Activated B cell treated with CpG ODN at 0.5 μM for 24 hours (primary cell): ENCODE measurements at regions of chr19 and their contacts with region 1.

Region 1: DNA sequence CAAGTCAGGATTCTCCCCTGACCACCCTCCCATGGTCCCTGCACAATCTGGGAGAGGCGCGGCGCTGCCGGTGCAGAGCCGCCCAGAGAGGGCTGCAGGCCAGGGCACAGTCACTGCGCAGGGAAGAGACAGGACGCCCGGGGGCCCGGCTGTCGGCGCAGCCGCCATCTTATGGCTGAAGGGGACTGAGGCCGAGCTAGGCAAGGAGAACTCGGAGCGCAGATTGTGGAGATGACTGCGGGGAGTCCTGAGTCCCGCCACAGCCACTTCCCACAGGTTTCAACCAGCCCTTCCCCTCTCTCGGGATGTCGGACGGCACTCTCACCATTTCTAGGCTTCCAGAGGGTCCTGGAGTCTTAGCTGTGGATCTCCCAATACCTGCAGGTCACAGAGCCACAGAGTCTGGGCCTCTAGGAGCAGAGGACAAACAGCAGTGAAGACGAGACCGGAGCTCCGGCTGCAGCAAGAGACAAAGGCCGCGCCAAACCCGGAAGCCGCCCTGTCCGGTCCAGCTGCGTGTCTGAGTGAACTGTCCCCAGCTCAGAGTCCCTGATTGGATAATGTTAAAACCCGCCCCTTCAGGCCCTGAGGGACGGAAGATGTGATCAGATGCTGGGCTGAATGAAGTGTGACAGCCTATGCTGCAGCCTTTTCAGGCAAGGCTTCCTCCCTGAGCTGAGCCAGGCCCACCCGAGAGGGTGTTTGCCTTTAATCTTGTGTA is at the start of gene ZNF708:
- DNase-seq: peak; percentile 55
- ATAC-seq: peak; percentile 99
- H3K4me3 Mint-ChIP-seq: peak within 1 kb of the TSS; percentile 99
- H3K27ac Mint-ChIP-seq: peak within 1 kb of the TSS; percentile 99
- H3K4me1 Mint-ChIP-seq: peaks cover 39% of the 10 kb centered on the region
- H3K27me3 Mint-ChIP-seq: no peaks in the 10 kb centered on the region
- CTCF ChIP-seq: no peak
- total RNA-seq, gene ZNF708: 24.3 and 30.6 TPM in 2 replicates

Region 2: GRCh38 chr19:20999731-21000352 is 329.2 kb before region 1 on chr19:
- CTCF ChIA-PET with region 1: no interaction called
- POLR2A ChIA-PET with region 1: interaction called, 10 read pairs
- intact Hi-C with region 1: no loop called
- DNase-seq: peak; percentile 74
- ATAC-seq: peak; percentile 100
- H3K4me3 Mint-ChIP-seq: peak overlapping the region; percentile 91
- H3K27ac Mint-ChIP-seq: peak overlapping the region; percentile 70
- H3K4me1 Mint-ChIP-seq: peaks cover 6% of the 10 kb centered on the region
- H3K27me3 Mint-ChIP-seq: no peaks in the 10 kb centered on the region
- CTCF ChIP-seq: no peak

Region 3: DNA sequence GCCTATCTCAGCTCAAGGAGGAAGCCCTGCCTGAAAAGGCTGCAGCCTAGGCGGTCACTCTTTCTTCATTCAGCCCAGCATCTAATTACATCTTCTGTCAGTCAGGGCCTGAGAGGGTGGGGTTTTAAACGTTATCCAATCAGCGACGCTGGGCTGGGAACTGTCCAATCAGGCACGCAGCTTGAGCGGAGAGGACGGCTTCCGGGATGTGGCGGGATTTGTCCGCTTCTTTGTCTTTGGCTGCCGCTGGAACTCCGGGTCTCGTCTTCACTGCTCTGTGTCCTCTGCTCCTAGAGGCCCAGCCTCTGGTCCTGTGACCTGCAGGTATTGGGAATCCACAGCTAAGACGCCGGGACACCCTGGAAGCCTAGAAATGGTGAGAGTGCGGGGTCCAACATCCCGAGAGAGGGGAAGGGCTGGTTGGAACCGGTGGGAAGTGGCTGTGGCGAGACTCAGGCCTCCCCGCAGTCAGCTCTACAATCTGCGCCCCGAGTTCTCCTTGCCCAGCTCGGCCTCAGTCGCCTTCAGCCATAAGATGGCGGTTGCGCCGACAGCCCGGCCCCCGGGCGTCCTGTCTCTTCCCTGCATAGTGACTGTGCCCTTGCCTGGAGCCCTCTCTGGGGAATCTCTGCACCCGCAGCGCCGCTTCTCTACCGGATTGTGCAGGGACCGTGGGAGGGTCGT is 29.9 kb after region 1 on chr19 and contains the start of gene ZNF738:
- CTCF ChIA-PET with region 1: no interaction called
- POLR2A ChIA-PET with region 1: interaction called, 26 read pairs
- intact Hi-C with region 1: loop called (anchors 1 kb)
- DNase-seq: peak; percentile 70
- ATAC-seq: peak; percentile 96
- H3K4me3 Mint-ChIP-seq: peak within 1 kb of the TSS; percentile 100
- H3K27ac Mint-ChIP-seq: peak within 1 kb of the TSS; percentile 96
- H3K4me1 Mint-ChIP-seq: peaks cover 13% of the 10 kb centered on the region
- H3K27me3 Mint-ChIP-seq: no peaks in the 10 kb centered on the region
- CTCF ChIP-seq: no peak
- total RNA-seq, gene ZNF738: 18.7 and 22.2 TPM in 2 replicates

Region 4: DNA sequence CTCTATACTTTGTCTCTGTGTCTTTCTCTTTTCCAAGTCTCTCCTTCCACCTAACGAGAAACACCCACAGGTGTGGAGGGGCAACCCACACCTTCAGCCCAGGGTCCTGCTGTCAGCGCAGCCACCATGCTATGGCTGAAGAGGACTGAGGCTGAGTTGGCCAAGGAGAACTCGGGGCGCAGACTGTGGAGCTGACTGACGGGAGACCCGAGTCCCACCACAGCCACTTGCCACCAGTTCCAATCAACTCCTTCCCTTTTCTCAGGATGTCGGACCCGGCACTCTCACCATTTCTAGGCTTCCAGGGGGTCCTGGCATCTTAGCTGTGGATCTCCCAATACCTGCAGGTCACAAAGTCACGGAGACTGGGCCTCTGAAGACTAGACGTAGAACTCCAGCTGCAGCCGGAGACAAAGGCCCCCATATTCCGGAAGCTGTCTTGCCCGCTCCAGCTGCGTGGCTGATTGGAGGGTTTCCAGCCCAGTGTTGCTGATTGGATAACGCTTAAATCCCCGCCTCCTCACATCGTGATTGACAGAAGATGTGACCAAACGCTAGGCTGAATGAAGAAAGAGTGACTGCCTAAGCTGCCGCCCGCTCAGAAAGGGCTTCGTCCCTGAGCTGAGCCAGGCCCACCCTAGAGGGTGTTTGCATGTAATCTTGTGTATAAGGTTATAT is 239.9 kb after region 1 on chr19:
- CTCF ChIA-PET with region 1: no interaction called
- POLR2A ChIA-PET with region 1: interaction called, 5 read pairs
- intact Hi-C with region 1: loop called (anchors 5 kb)
- DNase-seq: peak; percentile 58
- ATAC-seq: peak; percentile 94
- H3K4me3 Mint-ChIP-seq: peak overlapping the region; percentile 99
- H3K27ac Mint-ChIP-seq: peak overlapping the region; percentile 96
- H3K4me1 Mint-ChIP-seq: peaks cover 19% of the 10 kb centered on the region
- H3K27me3 Mint-ChIP-seq: no peaks in the 10 kb centered on the region
- CTCF ChIP-seq: no peak

Region 5: GRCh38 chr19:21835810-21836444 is 506.9 kb after region 1 on chr19 and contains the start of gene ZNF43:
- CTCF ChIA-PET with region 1: no interaction called
- POLR2A ChIA-PET with region 1: interaction called, 8 read pairs
- intact Hi-C with region 1: loop called (anchors 10 kb)
- DNase-seq: peak; percentile 77
- ATAC-seq: peak; percentile 98
- H3K4me3 Mint-ChIP-seq: peak within 1 kb of the TSS; percentile 100
- H3K27ac Mint-ChIP-seq: peak within 1 kb of the TSS; percentile 100
- H3K4me1 Mint-ChIP-seq: peaks cover 38% of the 10 kb centered on the region
- H3K27me3 Mint-ChIP-seq: no peaks in the 10 kb centered on the region
- CTCF ChIP-seq: no peak
- total RNA-seq, gene ZNF43: 41.8 and 52.4 TPM in 2 replicates

Region 6: DNA sequence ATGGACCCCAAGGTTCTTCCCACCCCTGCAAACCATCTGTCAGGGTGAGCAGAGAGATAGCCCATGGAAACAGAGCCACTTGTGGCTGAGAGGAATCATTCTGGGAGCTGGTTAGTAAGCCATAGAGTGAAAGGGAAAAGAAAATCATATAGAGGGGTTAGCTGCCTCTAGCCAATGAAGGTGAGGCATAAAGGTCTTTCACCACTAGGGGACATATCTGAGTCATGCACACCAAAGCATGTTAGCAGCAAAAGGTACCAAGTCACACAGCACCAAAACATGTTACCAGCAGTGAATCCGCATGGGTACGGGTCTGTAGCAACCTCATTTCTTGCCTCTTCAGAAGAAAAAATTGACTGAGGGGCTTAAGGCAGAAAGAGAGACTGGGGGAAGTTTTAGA is 583.6 kb after region 1 on chr19:
- CTCF ChIA-PET with region 1: no interaction called
- POLR2A ChIA-PET with region 1: no interaction called
- intact Hi-C with region 1: no loop called
- DNase-seq: no peak
- ATAC-seq: no peak
- H3K4me3 Mint-ChIP-seq: no peak overlapping the region
- H3K27ac Mint-ChIP-seq: no peak overlapping the region
- H3K4me1 Mint-ChIP-seq: no peaks in the 10 kb centered on the region
- H3K27me3 Mint-ChIP-seq: no peaks in the 10 kb centered on the region
- CTCF ChIP-seq: no peak